GM10248 (cell line): ENCODE measurements at regions of chr2 and their contacts with region 1.

Region 1: DNA sequence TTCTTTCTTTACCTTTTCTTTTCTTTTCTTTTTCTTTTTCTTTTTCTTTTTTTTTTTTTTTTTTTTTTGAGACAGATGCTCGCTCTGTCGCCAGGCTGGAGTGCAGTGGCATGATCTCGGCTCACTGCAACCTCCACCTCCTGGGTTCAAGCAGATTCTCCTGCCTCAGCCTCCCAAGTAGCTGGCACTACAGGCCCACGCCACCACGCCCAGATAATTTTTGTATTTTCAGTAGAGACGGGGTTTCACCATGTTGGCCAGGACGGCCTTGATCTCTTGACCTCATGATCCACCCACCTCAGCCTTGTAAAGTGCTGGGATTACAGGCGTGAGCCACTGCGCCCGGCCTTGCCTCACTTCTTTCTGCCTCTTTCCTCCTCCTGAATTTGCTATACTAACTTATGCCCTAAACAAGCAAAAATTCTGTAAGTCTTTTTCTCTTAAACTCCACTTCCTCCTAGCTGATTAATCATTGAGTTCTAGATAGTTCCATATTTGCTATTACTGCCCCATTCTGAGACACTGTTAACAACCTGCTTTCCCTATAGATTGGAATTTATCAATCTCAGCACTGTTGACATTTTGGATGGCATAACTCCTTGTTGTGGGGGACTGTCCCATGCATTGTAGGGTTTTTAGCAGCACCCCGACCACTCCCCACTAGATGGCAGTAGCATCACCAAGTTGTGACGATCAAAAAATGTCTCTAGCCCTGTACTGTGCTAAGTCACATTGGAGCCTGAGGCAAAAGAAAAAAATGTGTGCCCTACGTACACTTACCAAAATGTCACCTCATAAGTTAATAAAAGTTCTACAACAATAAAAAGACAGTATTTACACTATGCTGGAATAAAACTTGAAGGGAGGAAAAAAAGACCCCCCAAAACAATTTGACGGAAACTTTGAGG is 16.4 kb upstream of the THADA start:
- DNase-seq: peak; percentile 56
- CTCF ChIP-seq: peak; percentile 82

Region 2: GRCh38 chr2:43585708-43586107 is 26.5 kb before region 1 on chr2:
- CTCF ChIA-PET with region 1: no interaction called
- POLR2A ChIA-PET with region 1: no interaction called
- DNase-seq: no peak
- CTCF ChIP-seq: no peak

Region 3: DNA sequence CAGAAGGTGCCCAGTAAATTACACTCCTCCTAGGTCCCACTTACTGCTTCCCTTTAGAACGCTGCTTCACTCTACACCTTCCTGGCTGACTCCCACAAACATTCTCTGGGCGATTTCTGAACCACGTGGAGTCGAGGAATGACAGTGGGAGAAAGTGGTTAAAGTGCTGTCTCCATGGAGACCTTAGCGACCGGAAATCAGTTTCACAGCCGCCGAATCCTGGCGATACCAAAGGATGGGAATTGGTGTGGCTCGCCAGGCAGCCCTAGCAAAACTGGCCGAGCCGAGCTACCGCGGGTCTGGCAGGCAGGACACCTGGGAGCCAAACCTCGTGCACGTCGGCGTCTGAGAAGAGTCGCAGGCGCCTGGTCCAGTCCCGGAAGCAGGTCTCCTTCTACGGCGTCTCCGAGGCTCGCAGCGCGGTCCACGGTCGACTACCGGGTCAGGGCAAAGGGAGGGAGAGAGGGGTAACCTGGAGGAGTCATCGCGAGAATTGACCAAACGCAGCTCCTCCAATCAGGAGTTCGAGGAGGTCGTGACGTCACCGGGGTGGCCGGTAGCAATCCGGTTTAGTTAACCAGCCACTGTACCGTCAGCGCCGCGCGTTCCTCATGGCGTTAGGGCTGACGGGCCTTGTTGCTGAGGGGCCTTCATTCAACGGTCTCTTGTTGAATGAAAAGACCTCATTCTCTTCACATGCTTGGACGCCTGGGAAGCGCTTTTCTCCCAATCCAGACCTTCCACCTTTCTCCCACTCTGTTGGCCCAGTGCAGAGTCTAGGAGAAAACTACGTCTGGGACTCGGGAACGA is 16.4 kb before region 1 on chr2 and contains the start of gene THADA:
- CTCF ChIA-PET with region 1: interaction called, 10 read pairs
- POLR2A ChIA-PET with region 1: no interaction called
- DNase-seq: peak; percentile 98
- CTCF ChIP-seq: no peak

Region 4: DNA sequence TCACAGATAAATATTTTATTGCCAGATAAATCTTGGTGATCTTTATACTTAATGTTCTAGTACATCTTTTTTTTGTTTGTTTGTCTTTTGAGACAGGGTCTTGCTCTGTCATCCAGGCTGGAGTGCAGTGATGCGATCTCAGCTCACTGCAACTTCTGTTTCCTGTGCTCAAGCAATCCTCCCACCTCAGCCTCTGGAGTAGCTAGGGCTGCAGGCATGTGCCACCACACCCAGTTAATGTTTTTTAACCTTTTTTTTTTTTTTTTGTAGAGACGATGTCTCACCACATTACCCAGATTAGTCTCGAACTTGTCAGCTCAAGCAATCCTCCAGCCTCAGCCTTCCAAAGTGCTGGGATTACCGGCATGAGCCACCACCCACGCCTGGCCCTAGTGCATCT is 73.1 kb after region 1 on chr2:
- CTCF ChIA-PET with region 1: no interaction called
- POLR2A ChIA-PET with region 1: no interaction called
- DNase-seq: no peak
- CTCF ChIP-seq: no peak